Naive thymus-derived CD4-positive, alpha-beta T cell (primary cell): ENCODE measurements at regions of chr5 and their contacts with region 1.

Region 1: GRCh38 chr5:76544268-76544926 is 78.8 kb downstream of the F2RL2 start:
- DNase-seq: peak in 8 of 9 donors; percentile 37 to 69 (median 58)
- ATAC-seq: peak; percentile 31
- H3K4me3 ChIP-seq: peak overlapping the region; percentile 33
- H3K4me3 Mint-ChIP-seq: peak overlapping the region; percentile 43 to 80 (median 74)
- H3K27ac ChIP-seq: peak overlapping the region; percentile 73
- H3K27ac Mint-ChIP-seq: peak overlapping the region; percentile 93 to 98 (median 96)
- H3K4me1 ChIP-seq: peaks cover 57 to 86% of the 10 kb centered on the region in 2 donors
- H3K4me1 Mint-ChIP-seq: peaks cover 64 to 89% (median 84%) of the 10 kb centered on the region in 7 donors
- H3K27me3 ChIP-seq: no peaks in the 10 kb centered on the region
- H3K27me3 Mint-ChIP-seq: no peaks in the 10 kb centered on the region

Region 2: DNA sequence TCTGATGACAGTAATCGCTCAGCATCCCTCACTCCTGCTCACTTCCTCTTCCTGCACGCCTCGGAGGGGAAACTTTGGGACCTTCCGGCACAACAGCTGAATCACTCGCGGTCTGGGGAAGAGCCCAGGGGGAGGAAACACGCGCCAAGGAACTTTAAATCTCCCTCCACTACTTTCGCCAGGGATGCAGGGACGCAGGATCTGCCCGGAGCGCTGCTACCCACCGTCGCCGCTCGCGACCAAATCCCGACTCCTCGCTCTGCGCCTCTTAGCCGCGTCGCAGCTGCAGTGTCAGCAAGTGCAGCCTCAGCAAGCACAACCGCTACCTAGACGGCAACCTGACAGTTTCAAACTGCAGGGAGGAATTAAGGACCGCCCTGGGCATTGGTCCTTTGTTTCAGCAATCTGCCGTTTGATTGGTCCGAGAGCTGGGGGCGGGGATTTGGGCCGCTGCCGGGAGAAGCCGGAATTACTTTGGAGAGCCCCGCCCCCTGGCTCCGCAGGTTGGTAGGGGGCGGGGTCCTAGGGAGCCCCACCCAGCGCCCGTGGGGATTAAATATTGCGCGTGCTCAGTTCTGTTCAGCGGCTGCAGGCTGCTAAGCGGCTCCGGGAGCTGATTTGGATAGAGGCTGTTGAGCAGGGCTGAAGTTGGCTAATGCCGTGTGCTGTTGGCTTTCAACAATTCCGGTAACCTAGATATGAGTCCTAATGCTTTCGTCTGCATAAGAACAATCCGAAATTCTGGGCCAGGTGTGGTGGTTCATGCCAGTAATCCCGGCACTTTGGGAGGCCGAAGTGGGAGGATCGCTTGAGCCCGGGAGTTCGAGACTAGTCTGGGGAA is 827.1 kb before region 1 on chr5 and contains the start of gene POC5:
- CTCF ChIA-PET with region 1: no interaction called
- POLR2A ChIA-PET with region 1: no interaction called
- intact Hi-C with region 1: loop called (anchors 1 to 5 kb)
- DNase-seq: peak; percentile 93 to 99 (median 98)
- ATAC-seq: peak; percentile 97
- H3K4me3 ChIP-seq: peak within 1 kb of the TSS; percentile 74
- H3K4me3 Mint-ChIP-seq: peak within 1 kb of the TSS; percentile 93 to 100 (median 99)
- H3K27ac ChIP-seq: peak within 1 kb of the TSS; percentile 78
- H3K27ac Mint-ChIP-seq: peak within 1 kb of the TSS; percentile 92 to 100 (median 97)
- H3K4me1 ChIP-seq: peaks cover 5 to 8% of the 10 kb centered on the region in 2 donors
- H3K4me1 Mint-ChIP-seq: peaks cover 26 to 47% (median 37%) of the 10 kb centered on the region in 7 donors
- H3K27me3 ChIP-seq: no peaks in the 10 kb centered on the region
- H3K27me3 Mint-ChIP-seq: peaks cover 0 to 10% (median 0%) of the 10 kb centered on the region in 5 donors
- total RNA-seq, gene POC5: 8.5 to 17.9 (median 15.0) TPM

Region 3: GRCh38 chr5:76269932-76270610 is 274.3 kb before region 1 on chr5:
- CTCF ChIA-PET with region 1: interaction called, 3 read pairs
- POLR2A ChIA-PET with region 1: no interaction called
- intact Hi-C with region 1: loop called in 1 of 2 experiments (anchors 5 kb)
- DNase-seq: peak in 1 of 9 donors; percentile 44
- ATAC-seq: peak; percentile 22
- H3K4me3 ChIP-seq: no peak overlapping the region
- H3K4me3 Mint-ChIP-seq: peak overlapping the region in 1 of 10 donors; percentile 77
- H3K27ac ChIP-seq: no peak overlapping the region
- H3K27ac Mint-ChIP-seq: peak overlapping the region in 1 of 9 donors; percentile 89
- H3K4me1 ChIP-seq: no peaks in the 10 kb centered on the region
- H3K4me1 Mint-ChIP-seq: peaks cover 0 to 42% (median 4%) of the 10 kb centered on the region in 7 donors
- H3K27me3 ChIP-seq: no peaks in the 10 kb centered on the region
- H3K27me3 Mint-ChIP-seq: peaks cover 0 to 6% (median 4%) of the 10 kb centered on the region in 5 donors

Region 4: GRCh38 chr5:76393035-76393680 is 151.2 kb before region 1 on chr5:
- CTCF ChIA-PET with region 1: interaction called, 10 read pairs
- POLR2A ChIA-PET with region 1: interaction called, 9 read pairs
- intact Hi-C with region 1: no loop called
- DNase-seq: peak in 6 of 9 donors; percentile 26 to 52 (median 43)
- ATAC-seq: peak; percentile 88
- H3K4me3 ChIP-seq: no peak overlapping the region
- H3K4me3 Mint-ChIP-seq: peak overlapping the region; percentile 10 to 74 (median 57)
- H3K27ac ChIP-seq: peak overlapping the region; percentile 33
- H3K27ac Mint-ChIP-seq: peak overlapping the region in 8 of 9 donors; percentile 3 to 89 (median 82)
- H3K4me1 ChIP-seq: peaks cover 48 to 56% of the 10 kb centered on the region in 2 donors
- H3K4me1 Mint-ChIP-seq: peaks cover 37 to 71% (median 67%) of the 10 kb centered on the region in 7 donors
- H3K27me3 ChIP-seq: no peaks in the 10 kb centered on the region
- H3K27me3 Mint-ChIP-seq: peaks cover 0 to 3% (median 0%) of the 10 kb centered on the region in 5 donors

Region 5: GRCh38 chr5:76582230-76583162 is 38.1 kb after region 1 on chr5:
- CTCF ChIA-PET with region 1: interaction called, 25 read pairs
- POLR2A ChIA-PET with region 1: interaction called, 3 read pairs
- intact Hi-C with region 1: loop called (anchors 1 kb)
- DNase-seq: no peak
- ATAC-seq: peak; percentile 76
- H3K4me3 ChIP-seq: no peak overlapping the region
- H3K4me3 Mint-ChIP-seq: no peak overlapping the region
- H3K27ac ChIP-seq: no peak overlapping the region
- H3K27ac Mint-ChIP-seq: peak overlapping the region in 4 of 9 donors; percentile 18 to 76 (median 47)
- H3K4me1 ChIP-seq: no peaks in the 10 kb centered on the region
- H3K4me1 Mint-ChIP-seq: peaks cover 0 to 31% (median 13%) of the 10 kb centered on the region in 7 donors
- H3K27me3 ChIP-seq: no peaks in the 10 kb centered on the region
- H3K27me3 Mint-ChIP-seq: no peaks in the 10 kb centered on the region

Region 6: DNA sequence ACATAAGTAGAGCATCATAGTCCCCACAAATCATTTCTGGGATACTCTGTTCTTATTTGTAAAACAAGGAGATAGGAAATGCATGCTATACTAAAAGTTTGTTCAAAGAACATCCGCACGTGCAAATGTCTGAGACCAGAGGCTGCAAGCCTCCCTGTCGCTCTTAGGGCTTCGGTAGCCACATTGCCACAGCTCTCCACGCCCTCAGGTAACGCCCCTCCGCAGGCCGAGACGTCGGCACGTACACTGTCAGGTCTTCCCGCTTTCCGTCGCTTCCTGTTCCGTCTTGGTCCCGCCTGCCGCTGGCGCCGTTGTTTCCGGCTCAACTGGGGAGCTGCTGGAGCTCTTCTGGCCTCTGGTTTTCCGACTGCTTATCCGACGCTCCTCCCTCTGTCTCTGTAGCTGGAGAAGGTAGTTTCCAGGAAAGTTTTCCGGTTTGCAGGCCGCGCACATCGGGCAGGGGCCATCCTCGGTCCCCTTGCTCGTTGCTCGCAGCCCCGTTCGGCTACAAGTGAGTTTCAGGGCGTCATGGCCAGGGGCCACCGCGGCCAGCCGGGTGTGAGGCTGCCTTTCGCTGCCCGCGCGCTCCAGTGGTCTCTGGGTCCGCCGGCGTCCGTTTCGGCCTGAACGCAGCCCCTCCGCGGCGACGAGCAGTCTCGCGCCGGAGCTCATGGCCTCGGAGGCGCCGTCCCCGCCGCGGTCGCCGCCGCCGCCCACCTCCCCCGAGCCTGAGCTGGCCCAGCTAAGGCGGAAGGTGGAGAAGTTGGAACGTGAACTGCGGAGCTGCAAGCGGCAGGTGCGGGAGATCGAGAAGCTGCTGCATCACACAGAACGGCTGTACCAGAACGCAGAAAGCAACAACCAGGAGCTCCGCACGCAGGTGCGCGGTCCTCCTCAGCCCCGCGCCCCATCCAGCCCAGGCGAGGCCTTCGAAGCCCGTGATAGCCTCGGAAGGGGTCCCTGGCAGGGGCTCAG is 486.0 kb after region 1 on chr5 and contains the start of gene AGGF1:
- CTCF ChIA-PET with region 1: no interaction called
- POLR2A ChIA-PET with region 1: no interaction called
- intact Hi-C with region 1: loop called in 1 of 2 experiments (anchors 5 kb)
- DNase-seq: peak; percentile 69 to 93 (median 90)
- ATAC-seq: peak; percentile 99
- H3K4me3 ChIP-seq: peak within 1 kb of the TSS; percentile 94
- H3K4me3 Mint-ChIP-seq: peak within 1 kb of the TSS; percentile 77 to 97 (median 94)
- H3K27ac ChIP-seq: peak within 1 kb of the TSS; percentile 86
- H3K27ac Mint-ChIP-seq: peak within 1 kb of the TSS; percentile 88 to 97 (median 92)
- H3K4me1 ChIP-seq: peaks cover 11 to 24% of the 10 kb centered on the region in 2 donors
- H3K4me1 Mint-ChIP-seq: peaks cover 19 to 58% (median 40%) of the 10 kb centered on the region in 7 donors
- H3K27me3 ChIP-seq: no peaks in the 10 kb centered on the region
- H3K27me3 Mint-ChIP-seq: peaks cover 0 to 9% (median 0%) of the 10 kb centered on the region in 5 donors
- total RNA-seq, gene AGGF1: 17.2 to 32.4 (median 29.2) TPM